Activated naive CD8-positive, alpha-beta T cell treated with anti-CD3 and anti-CD28 coated beads, Interleukin-2, amount 10 ng/mL, durations not matched to agents 7 days and 5 days (primary cell): ENCODE measurements at regions of chr2 and their contacts with region 1.

Region 1: GRCh38 chr2:102418421-102418961 is 4.5 kb upstream of the IL18RAP start:
- DNase-seq: no peak
- ATAC-seq: peak; percentile 67
- H3K4me3 Mint-ChIP-seq: peak overlapping the region; percentile 86
- H3K27ac Mint-ChIP-seq: peak overlapping the region; percentile 94
- H3K4me1 Mint-ChIP-seq: peaks cover 62% of the 10 kb centered on the region
- H3K27me3 Mint-ChIP-seq: no peaks in the 10 kb centered on the region

Region 2: DNA sequence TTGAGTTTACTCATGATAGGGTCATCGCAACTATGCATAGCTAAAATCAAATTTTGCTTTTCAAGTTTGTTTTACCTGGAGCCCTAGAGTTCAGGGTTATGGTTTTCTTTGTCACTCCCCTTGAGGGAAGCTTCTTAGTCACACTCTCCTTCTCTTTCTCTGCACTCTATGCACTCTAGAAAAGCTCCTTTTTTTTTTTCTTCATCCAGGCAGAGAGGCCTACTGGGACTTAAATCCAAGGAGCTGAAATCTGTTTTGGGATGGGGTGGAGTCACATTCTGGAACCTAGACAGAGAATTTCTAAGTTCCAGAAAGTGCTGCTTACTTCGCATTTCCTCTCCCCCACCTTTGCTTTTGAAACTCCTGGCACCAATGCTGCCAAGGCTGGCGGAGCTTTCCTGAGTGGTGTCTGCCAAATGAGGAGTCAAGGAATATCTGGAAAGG is 82.0 kb before region 1 on chr2:
- POLR2A ChIA-PET with region 1: no interaction called
- DNase-seq: no peak
- ATAC-seq: no peak
- H3K4me3 Mint-ChIP-seq: no peak overlapping the region
- H3K27ac Mint-ChIP-seq: no peak overlapping the region
- H3K4me1 Mint-ChIP-seq: peaks cover 18% of the 10 kb centered on the region
- H3K27me3 Mint-ChIP-seq: no peaks in the 10 kb centered on the region

Region 3: GRCh38 chr2:102366406-102367112 is 51.9 kb before region 1 on chr2:
- POLR2A ChIA-PET with region 1: interaction called, 12 read pairs
- DNase-seq: no peak
- ATAC-seq: peak; percentile 14
- H3K4me3 Mint-ChIP-seq: peak overlapping the region; percentile 72
- H3K27ac Mint-ChIP-seq: peak overlapping the region; percentile 85
- H3K4me1 Mint-ChIP-seq: peaks cover 58% of the 10 kb centered on the region
- H3K27me3 Mint-ChIP-seq: no peaks in the 10 kb centered on the region

Region 4: GRCh38 chr2:102391565-102391964 is 26.9 kb before region 1 on chr2:
- POLR2A ChIA-PET with region 1: no interaction called
- DNase-seq: no peak
- ATAC-seq: no peak
- H3K4me3 Mint-ChIP-seq: no peak overlapping the region
- H3K27ac Mint-ChIP-seq: no peak overlapping the region
- H3K4me1 Mint-ChIP-seq: peaks cover 11% of the 10 kb centered on the region
- H3K27me3 Mint-ChIP-seq: no peaks in the 10 kb centered on the region